Activated CD4-positive, alpha-beta T cell treated with anti-CD3 and anti-CD28 coated beads, Interleukin-2, amount 10 ng/mL, durations not matched to agents 24 days and 14 days (primary cell): ENCODE measurements at regions of chr20 and their contacts with region 1.

Region 1: GRCh38 chr20:36975099-36975818 is 23.8 kb upstream of the SAMHD1 start:
- DNase-seq: peak; percentile 91
- H3K4me3 Mint-ChIP-seq: peak overlapping the region; percentile 68
- H3K27ac Mint-ChIP-seq: peak overlapping the region; percentile 82
- H3K4me1 Mint-ChIP-seq: peaks cover 27% of the 10 kb centered on the region
- H3K27me3 Mint-ChIP-seq: no peaks in the 10 kb centered on the region

Region 2: GRCh38 chr20:36951198-36951976 is 23.9 kb before region 1 on chr20 and contains the start of gene SAMHD1:
- intact Hi-C with region 1: loop called (anchors 2 kb)
- DNase-seq: peak; percentile 97
- H3K4me3 Mint-ChIP-seq: peak within 1 kb of the TSS; percentile 98
- H3K27ac Mint-ChIP-seq: peak within 1 kb of the TSS; percentile 96
- H3K4me1 Mint-ChIP-seq: peaks cover 43% of the 10 kb centered on the region
- H3K27me3 Mint-ChIP-seq: no peaks in the 10 kb centered on the region
- total RNA-seq, gene SAMHD1: 51.6 TPM in 2 replicates

Region 3: DNA sequence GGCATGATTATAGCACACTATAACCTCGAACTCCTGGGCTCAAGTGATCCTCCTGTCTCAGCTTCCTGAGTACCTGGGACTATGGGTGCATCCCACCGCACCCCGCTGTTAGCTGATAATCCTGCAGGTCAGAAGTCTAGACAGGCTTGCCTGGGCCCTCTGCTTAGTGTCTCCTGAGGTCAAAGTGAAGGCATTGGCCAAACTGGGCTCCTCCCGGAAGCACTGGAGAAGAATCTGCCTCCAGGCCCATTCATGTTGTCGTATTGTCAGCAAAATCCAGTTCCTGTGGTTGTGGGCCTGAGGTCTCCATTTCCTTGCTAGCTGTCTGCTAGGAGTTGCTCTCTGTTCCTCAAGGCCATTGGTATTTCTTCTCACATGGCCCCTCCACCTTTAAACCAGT is 210.4 kb after region 1 on chr20:
- intact Hi-C with region 1: no loop called
- DNase-seq: no peak
- H3K4me3 Mint-ChIP-seq: no peak overlapping the region
- H3K27ac Mint-ChIP-seq: no peak overlapping the region
- H3K4me1 Mint-ChIP-seq: peaks cover 53% of the 10 kb centered on the region
- H3K27me3 Mint-ChIP-seq: no peaks in the 10 kb centered on the region

Region 4: DNA sequence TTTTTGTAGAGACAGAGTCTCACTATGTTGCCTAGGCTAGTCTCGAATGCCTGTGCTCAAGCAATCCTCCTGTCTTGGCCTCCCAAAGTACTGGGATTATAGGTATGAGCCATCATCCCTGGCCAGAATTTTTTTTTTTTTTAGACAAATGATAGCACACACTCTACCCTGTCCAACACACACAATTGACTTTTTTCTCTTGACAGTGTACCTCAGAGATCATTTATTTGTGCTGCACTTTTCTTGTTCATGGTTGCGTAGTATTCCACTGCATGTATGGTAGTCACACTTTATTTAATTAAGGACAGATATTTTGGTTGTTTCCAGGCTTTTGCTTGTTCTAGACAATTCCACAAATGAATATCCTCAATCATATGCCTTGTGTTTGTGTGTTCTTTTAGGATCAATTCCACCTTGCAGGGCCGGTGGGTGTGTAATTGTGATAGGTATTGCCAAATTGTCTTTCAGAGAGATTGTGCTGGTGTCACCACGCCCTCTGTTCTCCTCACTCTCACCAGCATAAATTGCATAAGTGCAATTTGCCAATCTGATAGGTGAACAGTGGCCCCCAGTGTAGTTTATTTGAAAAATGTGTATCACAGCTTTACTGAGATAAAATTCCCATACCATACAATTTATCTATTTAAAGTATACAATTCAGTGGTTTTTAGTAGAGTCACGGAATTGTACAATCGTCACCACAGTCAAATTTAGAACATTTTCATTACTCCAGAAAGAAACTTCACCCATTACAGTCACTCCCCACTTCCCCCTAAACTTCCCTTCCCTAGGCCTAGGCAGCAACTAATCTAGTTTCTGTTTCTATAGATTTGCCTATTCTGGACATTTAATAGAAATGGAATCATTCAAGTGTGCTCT is 390.7 kb after region 1 on chr20:
- intact Hi-C with region 1: no loop called
- DNase-seq: no peak
- H3K4me3 Mint-ChIP-seq: no peak overlapping the region
- H3K27ac Mint-ChIP-seq: no peak overlapping the region
- H3K4me1 Mint-ChIP-seq: no peaks in the 10 kb centered on the region
- H3K27me3 Mint-ChIP-seq: no peaks in the 10 kb centered on the region